Colonic mucosa (tissue), 4 donors: ENCODE measurements at regions of chr3 and their contacts with region 1.

Region 1: DNA sequence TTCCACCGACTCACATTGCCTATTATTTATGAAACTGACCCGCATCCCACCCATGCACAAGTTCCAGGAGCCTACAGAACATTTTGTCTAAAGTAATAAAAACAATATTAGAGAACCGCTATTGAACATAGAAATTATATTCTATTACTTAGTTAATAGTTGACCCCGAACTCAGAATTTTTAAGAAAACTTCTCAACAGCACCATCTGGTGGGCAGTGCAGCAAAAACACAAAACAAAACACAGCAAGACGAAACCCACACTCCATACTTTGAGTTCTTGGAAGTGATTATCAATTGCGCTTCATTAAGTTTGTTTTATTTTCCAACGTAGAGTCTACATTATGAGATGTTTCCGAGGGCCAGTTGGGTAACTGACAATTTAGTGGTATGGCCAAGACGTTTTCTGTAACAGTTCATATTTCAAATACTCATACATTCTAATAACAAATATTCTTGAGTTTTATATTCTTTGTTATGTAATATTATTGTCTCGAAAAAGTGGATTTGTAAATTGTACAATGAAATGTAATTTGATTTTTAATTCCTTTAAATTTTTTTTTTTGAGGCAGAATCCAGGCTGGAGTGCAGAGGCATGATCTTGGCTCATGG is 24.0 kb upstream of the C3orf70 start:
- DNase-seq: peak; percentile 68
- H3K4me3 ChIP-seq: no peak overlapping the region
- H3K27ac ChIP-seq: no peak overlapping the region
- H3K4me1 ChIP-seq: peaks cover 10% of the 10 kb centered on the region
- H3K27me3 ChIP-seq: no peaks in the 10 kb centered on the region
- CTCF ChIP-seq: peak; percentile 71

Region 2: DNA sequence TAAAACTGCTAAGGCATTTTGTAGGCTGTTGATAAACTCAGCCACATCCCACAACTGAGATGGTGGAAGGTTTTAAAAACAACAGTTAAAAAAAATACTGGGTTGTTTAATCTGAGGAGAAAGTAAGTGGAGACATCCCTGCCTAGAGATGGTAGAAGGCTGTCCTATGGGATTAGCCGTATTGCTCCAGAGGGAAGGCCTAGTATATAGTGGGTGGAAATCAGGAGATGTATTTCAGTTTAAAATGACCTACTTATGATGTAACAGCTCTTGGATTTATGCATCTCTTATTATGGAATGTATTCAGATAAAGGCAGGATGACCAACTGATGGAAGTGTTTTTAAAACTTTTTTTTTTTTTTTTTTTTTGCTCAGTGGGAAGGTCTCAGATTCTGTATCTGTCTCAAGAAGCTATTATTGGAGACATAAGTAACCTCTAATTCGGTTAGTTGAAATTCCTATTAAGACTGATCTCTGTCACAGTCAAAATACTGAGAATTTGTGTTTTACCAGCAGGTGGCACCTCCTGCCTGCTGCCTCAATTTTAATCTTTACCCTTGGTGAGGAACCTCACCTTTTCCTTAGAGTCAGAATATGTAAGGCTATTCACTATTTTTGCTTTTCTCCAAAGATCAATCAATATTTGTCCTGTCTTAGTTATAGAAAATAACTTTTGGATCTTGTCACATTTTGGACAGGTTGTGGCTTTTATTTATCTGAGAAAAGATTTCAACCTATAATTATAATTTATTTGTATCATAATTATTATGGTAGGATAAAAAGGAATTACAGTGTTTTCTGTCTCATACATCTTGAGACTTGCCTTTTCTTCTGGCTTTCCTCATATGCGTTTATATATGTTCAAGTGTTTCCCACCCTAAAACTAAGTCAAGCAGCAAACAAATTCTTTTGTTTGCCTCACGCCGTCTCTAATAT is 301.9 kb before region 1 on chr3:
- intact Hi-C with region 1: loop called (anchors 5 kb)
- DNase-seq: peak; percentile 23
- H3K4me3 ChIP-seq: no peak overlapping the region
- H3K27ac ChIP-seq: no peak overlapping the region
- H3K4me1 ChIP-seq: no peaks in the 10 kb centered on the region
- H3K27me3 ChIP-seq: no peaks in the 10 kb centered on the region
- CTCF ChIP-seq: peak; percentile 54

Region 3: GRCh38 chr3:184914628-184915027 is 262.2 kb before region 1 on chr3:
- intact Hi-C with region 1: no loop called
- DNase-seq: no peak
- H3K4me3 ChIP-seq: no peak overlapping the region
- H3K27ac ChIP-seq: no peak overlapping the region
- H3K4me1 ChIP-seq: no peaks in the 10 kb centered on the region
- H3K27me3 ChIP-seq: no peaks in the 10 kb centered on the region
- CTCF ChIP-seq: no peak

Region 4: DNA sequence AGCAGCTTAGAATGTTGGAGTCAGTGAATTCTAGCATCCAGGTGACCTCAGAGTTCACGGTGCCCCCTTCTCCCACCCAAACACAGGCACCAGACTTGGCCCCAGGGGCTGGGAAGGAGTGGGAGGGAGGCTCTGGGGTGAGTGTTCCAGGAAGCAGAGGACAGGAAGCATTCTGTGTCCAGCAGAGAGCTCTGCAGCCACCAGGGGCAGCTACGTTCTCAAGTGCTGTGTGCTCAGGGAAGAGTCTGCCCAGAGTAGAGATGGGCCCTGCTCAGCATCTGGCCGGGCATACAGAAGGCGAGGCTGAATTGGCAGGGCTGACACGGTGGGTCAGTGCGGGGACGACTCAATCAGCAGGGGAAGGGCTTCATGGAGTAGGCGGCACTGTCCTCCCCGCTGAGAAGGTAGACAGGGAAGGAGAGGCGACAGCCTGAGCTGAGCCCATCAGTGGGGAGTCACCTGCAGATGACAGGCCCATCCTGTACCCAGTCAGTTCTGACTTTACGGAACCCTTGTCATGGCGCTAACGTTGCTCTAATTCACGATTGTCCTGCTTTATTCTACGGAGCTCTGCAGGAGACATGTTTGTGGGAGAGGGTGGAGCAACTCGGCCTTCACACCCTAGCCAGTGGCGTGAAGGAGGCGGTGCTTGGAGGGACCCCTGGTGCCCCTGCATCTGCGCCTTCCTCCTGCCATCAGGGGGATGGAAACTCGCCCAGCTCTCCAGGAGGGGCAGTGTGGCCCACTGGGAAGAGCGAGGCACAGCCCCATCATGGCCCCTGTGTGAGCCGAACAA is 106.2 kb before region 1 on chr3:
- intact Hi-C with region 1: loop called (anchors 5 kb)
- DNase-seq: peak; percentile 61
- H3K4me3 ChIP-seq: no peak overlapping the region
- H3K27ac ChIP-seq: peak overlapping the region; percentile 84
- H3K4me1 ChIP-seq: peaks cover 13% of the 10 kb centered on the region
- H3K27me3 ChIP-seq: no peaks in the 10 kb centered on the region
- CTCF ChIP-seq: peak; percentile 41

Region 5: DNA sequence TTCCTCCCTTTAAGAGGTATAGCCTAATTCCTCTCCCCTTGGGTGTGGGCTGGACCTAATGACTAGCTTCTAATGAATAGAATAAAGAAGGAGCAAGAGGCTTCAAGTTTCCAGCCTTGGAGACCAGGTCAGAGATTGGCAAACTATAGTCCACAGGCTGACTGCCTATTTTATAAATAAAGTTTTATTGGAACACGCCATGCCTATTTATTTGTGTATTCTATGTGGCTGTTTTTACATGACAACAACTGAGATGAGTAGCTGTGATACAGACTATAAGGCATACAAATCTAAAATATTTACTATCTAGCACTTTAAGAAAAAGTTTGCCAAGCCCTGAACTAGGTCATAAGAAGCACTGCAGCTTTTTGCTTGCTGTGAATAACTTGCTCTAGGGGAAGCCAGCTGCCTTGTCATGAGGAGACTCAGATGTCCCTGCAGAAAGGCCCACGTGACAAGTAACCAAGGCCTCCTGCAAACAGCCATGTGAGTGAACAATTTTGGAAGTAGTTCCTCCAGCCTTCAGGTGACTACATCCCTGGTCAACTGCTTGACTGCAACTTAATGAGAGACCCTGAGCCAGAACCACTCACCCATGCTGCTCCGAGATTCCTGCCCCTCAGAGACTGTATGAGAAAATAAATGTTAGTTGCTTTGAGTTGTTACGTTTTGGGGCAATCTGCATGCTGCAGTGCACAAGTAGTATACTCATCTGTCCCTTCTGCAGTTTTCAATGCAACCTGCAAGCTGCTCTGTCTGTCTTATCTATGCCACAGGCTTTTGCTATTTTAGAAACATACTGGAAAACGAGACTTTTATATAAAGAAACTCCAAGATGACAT is 165.0 kb after region 1 on chr3:
- intact Hi-C with region 1: no loop called
- DNase-seq: no peak
- H3K4me3 ChIP-seq: no peak overlapping the region
- H3K27ac ChIP-seq: no peak overlapping the region
- H3K4me1 ChIP-seq: no peaks in the 10 kb centered on the region
- H3K27me3 ChIP-seq: no peaks in the 10 kb centered on the region
- CTCF ChIP-seq: no peak